Endothelial cell of umbilical vein (primary cell): ENCODE measurements at regions of chr6 and their contacts with region 1.

Region 1: GRCh38 chr6:34986845-34987246 is 97.8 kb downstream of the ANKS1A start:
- DNase-seq: peak; percentile 81
- H3K4me3 ChIP-seq: no peak overlapping the region
- H3K27ac ChIP-seq: peak overlapping the region; percentile 8
- H3K4me1 ChIP-seq: peaks cover 9% of the 10 kb centered on the region
- H3K27me3 ChIP-seq: no peaks in the 10 kb centered on the region
- CTCF ChIP-seq: peak; percentile 64 to 68
- POLR2A ChIP-seq: no peak

Region 2: GRCh38 chr6:34027445-34027936 is 959.4 kb before region 1 on chr6:
- CTCF ChIA-PET with region 1: no interaction called
- POLR2A ChIA-PET with region 1: no interaction called
- dilution Hi-C with region 1: no loop called
- intact Hi-C with region 1: no loop called
- DNase-seq: peak; percentile 7
- H3K4me3 ChIP-seq: no peak overlapping the region
- H3K27ac ChIP-seq: no peak overlapping the region
- H3K4me1 ChIP-seq: no peaks in the 10 kb centered on the region
- H3K27me3 ChIP-seq: no peaks in the 10 kb centered on the region
- CTCF ChIP-seq: peak; percentile 74 to 90
- POLR2A ChIP-seq: no peak

Region 3: GRCh38 chr6:34973547-34974248 is 13.1 kb before region 1 on chr6:
- CTCF ChIA-PET with region 1: interaction called, 18 read pairs
- POLR2A ChIA-PET with region 1: no interaction called
- dilution Hi-C with region 1: no loop called
- intact Hi-C with region 1: no loop called
- DNase-seq: no peak
- H3K4me3 ChIP-seq: no peak overlapping the region
- H3K27ac ChIP-seq: no peak overlapping the region
- H3K4me1 ChIP-seq: no peaks in the 10 kb centered on the region
- H3K27me3 ChIP-seq: no peaks in the 10 kb centered on the region
- CTCF ChIP-seq: peak; percentile 4 to 41
- POLR2A ChIP-seq: no peak

Region 4: DNA sequence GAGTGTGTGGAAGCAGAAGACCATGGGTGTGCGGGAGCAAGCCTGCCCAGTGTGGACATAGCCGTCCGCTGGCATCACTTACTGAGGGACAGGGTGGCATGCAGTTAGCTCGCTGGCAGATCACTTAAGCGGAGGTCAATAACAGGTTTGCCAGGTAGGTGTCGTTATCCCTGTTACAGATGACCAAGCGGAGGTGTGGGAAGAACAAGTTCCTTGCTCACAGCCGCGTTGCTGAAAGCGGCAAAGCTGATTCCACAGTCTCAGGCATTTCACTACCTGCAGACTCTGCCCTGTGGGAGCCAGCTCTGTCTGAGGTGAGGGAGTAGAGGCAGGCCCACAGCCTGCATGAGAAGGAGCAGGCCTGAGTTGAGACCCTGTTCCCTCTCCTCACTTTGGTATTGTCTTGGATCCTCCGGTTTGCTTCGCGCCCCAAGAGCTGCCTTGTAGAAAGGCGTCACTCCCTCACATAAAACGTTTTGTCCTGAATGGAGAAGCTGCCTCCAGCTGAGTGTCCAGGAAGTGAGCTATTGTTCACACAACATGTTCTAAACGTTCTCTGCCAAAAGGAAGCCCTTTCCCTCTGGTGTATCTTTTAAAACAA is 57.4 kb after region 1 on chr6:
- CTCF ChIA-PET with region 1: interaction called, 13 read pairs
- POLR2A ChIA-PET with region 1: no interaction called
- dilution Hi-C with region 1: no loop called
- intact Hi-C with region 1: loop called (anchors 2 kb)
- DNase-seq: no peak
- H3K4me3 ChIP-seq: no peak overlapping the region
- H3K27ac ChIP-seq: peak overlapping the region; percentile 90
- H3K4me1 ChIP-seq: peaks cover 67% of the 10 kb centered on the region
- H3K27me3 ChIP-seq: no peaks in the 10 kb centered on the region
- CTCF ChIP-seq: no peak
- POLR2A ChIP-seq: no peak

Region 5: DNA sequence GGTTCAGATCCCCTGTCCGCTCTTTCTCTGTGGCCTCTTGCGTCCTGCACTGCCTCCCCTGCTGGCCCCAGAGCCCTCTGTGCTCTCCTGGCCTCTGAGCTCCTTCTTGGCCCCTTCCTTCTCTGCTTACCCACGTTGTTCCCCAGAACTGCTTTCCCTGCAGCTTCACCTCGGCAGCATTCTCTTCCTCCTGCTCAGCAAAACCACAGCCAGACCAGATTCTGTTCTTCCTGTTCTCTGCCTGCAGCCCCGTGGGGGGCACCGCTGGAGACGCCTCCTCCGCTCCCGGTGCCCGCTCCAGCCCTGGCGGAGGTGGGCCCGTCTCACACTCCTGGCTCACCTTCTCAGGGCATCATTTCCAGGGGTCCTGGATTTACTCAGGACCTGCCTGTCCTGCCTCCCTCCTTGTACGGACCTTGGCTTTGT is 94.6 kb after region 1 on chr6:
- CTCF ChIA-PET with region 1: interaction called, 15 read pairs
- POLR2A ChIA-PET with region 1: no interaction called
- dilution Hi-C with region 1: no loop called
- intact Hi-C with region 1: loop called (anchors 5 kb)
- DNase-seq: peak; percentile 6
- H3K4me3 ChIP-seq: no peak overlapping the region
- H3K27ac ChIP-seq: no peak overlapping the region
- H3K4me1 ChIP-seq: peaks cover 4% of the 10 kb centered on the region
- H3K27me3 ChIP-seq: no peaks in the 10 kb centered on the region
- CTCF ChIP-seq: no peak
- POLR2A ChIP-seq: no peak

Region 6: DNA sequence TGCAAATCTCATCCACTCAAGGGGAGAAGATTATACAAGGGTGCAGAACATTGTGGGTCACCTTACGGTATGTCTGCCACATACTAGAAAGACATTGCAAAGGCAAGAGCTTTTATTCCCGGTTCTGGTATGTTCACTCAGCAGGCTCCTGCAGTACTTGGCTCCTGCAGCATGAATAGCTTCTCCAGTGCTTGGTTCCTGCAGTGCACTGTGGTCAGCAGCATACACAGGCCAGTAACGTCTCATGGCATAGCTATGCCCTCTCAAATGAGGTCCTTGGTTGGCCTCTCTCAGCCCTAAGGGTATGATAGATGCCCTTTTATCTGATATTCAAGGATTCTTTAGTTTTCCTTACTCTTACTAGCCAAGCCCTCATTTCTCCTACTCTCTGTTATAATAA is 141.7 kb after region 1 on chr6:
- CTCF ChIA-PET with region 1: interaction called, 29 read pairs
- POLR2A ChIA-PET with region 1: no interaction called
- dilution Hi-C with region 1: no loop called
- intact Hi-C with region 1: no loop called
- DNase-seq: no peak
- H3K4me3 ChIP-seq: no peak overlapping the region
- H3K27ac ChIP-seq: no peak overlapping the region
- H3K4me1 ChIP-seq: no peaks in the 10 kb centered on the region
- H3K27me3 ChIP-seq: peaks cover 10 to 13% of the 10 kb centered on the region in 2 experiments
- CTCF ChIP-seq: no peak
- POLR2A ChIP-seq: no peak

Region 7: GRCh38 chr6:35202066-35202546 is 215.3 kb after region 1 on chr6:
- CTCF ChIA-PET with region 1: interaction called, 75 read pairs
- POLR2A ChIA-PET with region 1: no interaction called
- dilution Hi-C with region 1: no loop called
- intact Hi-C with region 1: loop called (anchors 2 kb)
- DNase-seq: no peak
- H3K4me3 ChIP-seq: no peak overlapping the region
- H3K27ac ChIP-seq: no peak overlapping the region
- H3K4me1 ChIP-seq: no peaks in the 10 kb centered on the region
- H3K27me3 ChIP-seq: peaks cover 17 to 20% of the 10 kb centered on the region in 2 experiments
- CTCF ChIP-seq: no peak
- POLR2A ChIP-seq: no peak